Right cardiac atrium (tissue), 5 donors: ENCODE measurements at regions of chr10 and their contacts with region 1.

Region 1: DNA sequence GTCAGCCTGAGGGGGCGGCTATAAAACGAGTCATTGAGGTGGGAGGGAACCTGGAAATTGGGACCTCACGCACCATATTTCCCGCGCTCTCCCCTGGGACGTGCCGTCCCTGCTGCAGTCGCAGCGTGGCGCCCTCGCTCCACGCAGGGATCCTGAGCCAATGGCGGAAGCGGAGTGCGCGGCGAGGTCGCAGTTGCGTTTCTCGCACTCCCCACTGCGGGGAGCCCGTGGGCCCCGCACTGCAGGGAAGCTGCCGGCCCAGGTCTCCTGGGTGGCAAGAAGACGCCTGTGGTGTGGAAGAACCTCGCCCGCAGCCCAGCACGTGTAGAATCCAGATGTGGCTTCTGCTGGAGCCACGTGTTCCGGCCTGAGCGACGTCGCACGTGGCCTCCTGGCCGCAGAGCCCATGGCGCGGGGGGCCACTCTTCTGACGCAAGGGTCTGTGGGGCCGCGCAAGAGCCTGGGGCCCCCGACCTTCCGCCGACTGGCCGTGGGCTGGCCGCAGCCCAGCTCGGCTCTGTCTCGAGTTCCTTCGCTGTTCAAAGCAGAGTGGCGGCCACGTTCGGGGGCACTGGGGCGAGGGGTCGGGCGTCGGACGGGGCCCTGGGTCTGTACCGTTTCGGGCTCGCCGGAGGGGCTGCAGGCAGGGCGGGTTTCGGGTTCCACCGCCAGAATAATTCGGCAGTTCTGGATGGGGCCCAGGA is 26.4 kb downstream of the HIF1AN start:
- DNase-seq: peak; percentile 62 to 85 (median 81)
- ATAC-seq: peak; percentile 58 to 78
- H3K4me3 ChIP-seq: peak overlapping the region; percentile 8
- H3K27ac ChIP-seq: no peak overlapping the region
- H3K4me1 ChIP-seq: no peaks in the 10 kb centered on the region
- H3K27me3 ChIP-seq: no peaks in the 10 kb centered on the region

Region 2: GRCh38 chr10:100791369-100792058 is 229.4 kb after region 1 on chr10:
- intact Hi-C with region 1: no loop called
- DNase-seq: no peak
- ATAC-seq: no peak
- H3K4me3 ChIP-seq: no peak overlapping the region
- H3K27ac ChIP-seq: no peak overlapping the region
- H3K4me1 ChIP-seq: no peaks in the 10 kb centered on the region
- H3K27me3 ChIP-seq: no peaks in the 10 kb centered on the region

Region 3: GRCh38 chr10:100872034-100872791 is 310.1 kb after region 1 on chr10:
- intact Hi-C with region 1: loop called in 3 of 4 experiments (anchors 5 kb)
- DNase-seq: peak in 1 of 3 donors; percentile 55
- ATAC-seq: peak; percentile 44 to 48
- H3K4me3 ChIP-seq: no peak overlapping the region
- H3K27ac ChIP-seq: no peak overlapping the region
- H3K4me1 ChIP-seq: no peaks in the 10 kb centered on the region
- H3K27me3 ChIP-seq: no peaks in the 10 kb centered on the region

Region 4: DNA sequence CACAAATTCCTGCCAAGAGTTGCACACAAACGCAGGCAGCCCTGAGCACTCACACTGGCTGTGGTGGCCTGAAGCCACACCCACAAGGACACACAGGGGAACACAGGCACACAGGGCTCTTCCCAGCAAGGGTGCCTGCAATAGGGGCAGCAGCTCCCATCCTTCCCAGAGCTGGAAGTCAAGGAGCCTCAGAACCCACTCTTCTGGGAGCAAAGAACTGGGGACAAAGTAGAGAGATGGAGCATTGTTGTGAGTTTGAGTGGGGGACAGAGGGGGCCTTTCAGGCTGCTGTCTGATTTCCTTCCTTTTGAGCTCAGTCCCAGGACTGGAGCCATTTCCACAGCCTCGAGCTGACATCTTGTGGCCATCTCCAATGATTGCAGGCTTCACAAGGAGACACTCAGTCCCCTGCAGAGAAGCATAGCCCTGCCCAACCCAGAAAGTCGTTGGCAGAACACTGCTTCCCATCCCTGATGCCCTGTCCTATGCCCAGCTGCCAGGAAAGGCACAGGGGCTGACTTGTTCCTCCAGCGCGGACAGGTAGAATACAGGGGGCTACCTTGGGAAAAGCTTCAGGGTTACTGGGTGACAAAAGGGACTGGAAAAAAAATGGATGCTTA is 316.2 kb after region 1 on chr10:
- intact Hi-C with region 1: loop called in 3 of 4 experiments (anchors 5 kb)
- DNase-seq: peak in 1 of 3 donors; percentile 43
- ATAC-seq: peak; percentile 71 to 75
- H3K4me3 ChIP-seq: no peak overlapping the region
- H3K27ac ChIP-seq: no peak overlapping the region
- H3K4me1 ChIP-seq: no peaks in the 10 kb centered on the region
- H3K27me3 ChIP-seq: no peaks in the 10 kb centered on the region